ENCODE measurements at regions of chr4 and their contacts with region 1.

Region 1: DNA sequence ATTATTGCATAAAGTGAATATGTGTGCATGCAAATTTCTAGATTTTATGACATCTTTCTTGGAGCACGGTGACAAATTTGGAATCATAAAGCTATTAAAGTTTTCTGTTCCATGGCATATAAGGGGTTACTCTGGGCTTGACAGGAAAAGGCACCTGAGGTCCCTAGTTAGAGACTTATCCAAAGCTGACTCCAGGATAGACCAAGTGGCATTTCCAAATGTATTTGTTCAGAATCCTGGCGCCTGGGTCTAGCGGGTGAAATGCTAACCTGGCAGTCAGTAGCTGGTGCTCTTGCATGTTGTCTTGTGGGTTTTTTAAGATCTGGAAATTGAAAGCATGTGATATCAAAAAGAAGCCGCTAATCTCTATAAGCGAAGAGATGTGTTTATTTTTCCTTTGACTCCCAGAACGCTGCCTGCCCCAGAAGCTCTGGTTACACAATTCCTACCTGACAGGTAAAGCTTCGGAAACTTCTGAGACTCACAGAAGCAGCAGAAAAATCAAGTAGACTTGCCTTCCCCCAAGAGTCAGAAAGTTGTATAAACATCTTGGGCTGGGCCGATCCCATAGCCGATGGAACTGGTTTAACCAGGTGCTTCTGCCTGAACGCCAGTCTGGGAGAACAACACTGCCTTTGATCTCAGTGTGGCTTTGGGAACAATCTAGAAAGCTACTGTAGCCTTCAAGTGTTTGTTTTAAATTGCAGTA is 12.9 kb upstream of the ZCCHC4 start:
- DNase-seq: no peak
- H3K4me3 ChIP-seq: no peak overlapping the region
- H3K27me3 ChIP-seq: peaks cover 6% of the 10 kb centered on the region; the same call in 1 of the 2 replicates
- CTCF ChIP-seq: no peak

Region 2: GRCh38 chr4:24980064-24980690 is 319.5 kb before region 1 on chr4:
- CTCF ChIA-PET with region 1: no interaction called
- POLR2A ChIA-PET with region 1: no interaction called
- DNase-seq: no peak
- H3K4me3 ChIP-seq: no peak overlapping the region
- H3K27me3 ChIP-seq: peaks cover 9% of the 10 kb centered on the region
- CTCF ChIP-seq: peak; percentile 89

Region 3: DNA sequence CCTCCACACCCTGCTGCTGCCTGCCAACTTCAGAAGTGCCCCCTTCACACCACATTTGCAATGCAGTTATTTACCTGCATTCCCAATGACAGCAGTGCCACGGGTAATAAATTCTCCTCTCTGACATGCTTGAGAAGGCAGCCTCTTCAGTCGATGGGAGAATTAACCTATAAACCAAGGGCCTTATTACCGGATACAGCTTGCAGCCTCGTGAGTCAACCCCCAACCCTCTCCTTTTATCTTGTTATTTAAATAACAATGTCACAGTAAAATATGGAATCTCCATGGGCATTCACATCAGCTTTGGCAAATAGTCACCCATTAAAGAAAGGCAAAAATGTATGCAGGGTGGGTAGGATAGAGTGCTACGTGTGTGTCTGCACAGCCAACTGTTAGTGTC is 234.2 kb before region 1 on chr4:
- CTCF ChIA-PET with region 1: no interaction called
- POLR2A ChIA-PET with region 1: no interaction called
- DNase-seq: no peak
- H3K4me3 ChIP-seq: no peak overlapping the region
- H3K27me3 ChIP-seq: no peaks in the 10 kb centered on the region; the same call in 1 of the 2 replicates
- CTCF ChIP-seq: no peak

Region 4: DNA sequence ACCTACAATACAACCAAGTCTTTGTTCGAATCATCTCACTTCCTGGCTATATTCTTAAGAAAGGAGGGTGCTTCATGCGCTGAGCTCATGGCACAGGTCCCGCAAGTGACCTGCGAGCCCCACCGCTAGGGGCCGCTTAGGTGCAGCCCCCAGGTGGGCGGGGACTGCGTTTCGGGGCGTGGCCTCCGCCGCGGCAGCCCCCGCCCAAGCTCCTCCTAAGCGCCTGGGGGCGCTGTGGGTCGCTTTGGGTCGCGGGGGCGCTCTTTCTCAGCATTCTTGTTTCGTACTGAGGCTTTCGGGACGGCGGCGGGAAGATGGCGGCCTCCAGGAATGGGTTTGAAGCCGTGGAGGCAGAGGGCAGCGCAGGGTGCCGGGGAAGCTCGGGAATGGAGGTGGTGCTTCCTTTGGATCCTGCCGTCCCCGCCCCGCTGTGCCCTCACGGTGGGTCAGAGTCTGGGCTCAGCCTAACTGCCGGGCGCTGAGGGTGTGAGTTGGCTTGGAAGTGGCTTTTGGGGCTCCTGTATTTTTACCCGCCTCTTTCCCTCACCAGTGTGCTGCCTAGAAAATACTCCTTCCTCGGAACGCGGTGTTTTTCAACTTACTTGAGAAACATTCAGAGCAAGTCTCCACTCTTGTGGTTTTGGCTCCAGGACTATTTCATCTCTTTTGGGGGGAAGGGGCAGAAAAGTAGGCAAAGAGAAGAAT is 13.0 kb after region 1 on chr4 and contains the start of gene ZCCHC4:
- CTCF ChIA-PET with region 1: interaction called, 13 read pairs
- POLR2A ChIA-PET with region 1: no interaction called
- DNase-seq: peak; percentile 24
- H3K4me3 ChIP-seq: peak within 1 kb of the TSS; percentile 53
- H3K27me3 ChIP-seq: no peaks in the 10 kb centered on the region
- CTCF ChIP-seq: peak; percentile 91
- polyA plus RNA-seq, gene ZCCHC4: 5.8 and 10.0 TPM in 2 replicates

Region 5: GRCh38 chr4:25484243-25484721 is 184.6 kb after region 1 on chr4:
- CTCF ChIA-PET with region 1: no interaction called
- POLR2A ChIA-PET with region 1: no interaction called
- DNase-seq: no peak
- H3K4me3 ChIP-seq: no peak overlapping the region
- H3K27me3 ChIP-seq: no peaks in the 10 kb centered on the region; the same call in 1 of the 2 replicates
- CTCF ChIP-seq: no peak

Measured in BJ (cell line).